Mammary epithelial cell (primary cell): ENCODE measurements at regions of chrX and their contacts with region 1.

Region 1: GRCh38 chrX:136694431-136695087 is 46.6 kb downstream of the CD40LG start:
- DNase-seq: peak; percentile 20
- H3K4me3 ChIP-seq: no peak overlapping the region
- H3K27ac ChIP-seq: no peak overlapping the region
- H3K4me1 ChIP-seq: peaks cover 5% of the 10 kb centered on the region
- H3K27me3 ChIP-seq: no peaks in the 10 kb centered on the region
- CTCF ChIP-seq: peak; percentile 79 to 80

Region 2: DNA sequence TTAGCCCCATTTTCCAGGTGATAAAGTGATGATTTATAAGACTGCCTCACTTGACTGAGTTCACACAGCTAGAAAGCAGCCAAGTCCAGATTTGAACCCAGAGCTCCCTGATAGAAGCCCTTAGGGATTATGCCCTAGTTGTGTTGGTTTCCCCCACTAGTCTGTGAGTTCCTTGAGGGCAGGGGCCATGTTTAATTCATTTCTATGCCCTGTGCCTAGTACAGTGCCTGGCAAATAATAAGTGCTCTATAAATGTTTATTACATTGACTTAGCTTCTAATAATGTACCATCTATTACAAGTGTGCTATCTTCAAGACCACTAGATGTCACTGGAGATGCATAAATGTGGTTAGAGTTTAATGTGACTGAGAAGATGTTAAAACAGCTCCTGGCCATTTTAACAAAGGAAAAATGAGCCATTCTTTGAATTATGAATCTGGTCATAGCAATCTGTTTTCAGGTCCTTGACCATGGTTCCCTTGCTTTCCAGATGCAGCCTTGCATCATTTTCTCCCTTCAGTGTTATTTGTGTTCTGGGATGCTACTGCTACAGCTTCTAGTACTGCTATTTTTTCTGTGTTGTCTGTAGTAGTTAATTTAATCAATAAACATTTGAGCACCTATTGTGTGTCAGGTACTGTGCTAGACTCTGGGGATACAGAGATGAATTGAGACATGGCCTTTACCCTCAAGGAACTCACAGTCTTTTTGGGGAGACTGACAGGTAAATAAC is 666.1 kb before region 1 on chrX:
- CTCF ChIA-PET with region 1: interaction called, 3 read pairs
- dilution Hi-C with region 1: no loop called
- in situ Hi-C with region 1: no loop called
- intact Hi-C with region 1: loop called (anchors 2 kb)
- DNase-seq: peak; percentile 53
- H3K4me3 ChIP-seq: no peak overlapping the region
- H3K27ac ChIP-seq: no peak overlapping the region
- H3K4me1 ChIP-seq: no peaks in the 10 kb centered on the region
- H3K27me3 ChIP-seq: no peaks in the 10 kb centered on the region
- CTCF ChIP-seq: peak; percentile 59 to 67

Region 3: GRCh38 chrX:136251041-136251991 is 443.2 kb before region 1 on chrX and contains the start of gene MAP7D3:
- CTCF ChIA-PET with region 1: no interaction called
- dilution Hi-C with region 1: no loop called
- in situ Hi-C with region 1: loop called in 1 of 2 experiments (anchors 25 kb)
- intact Hi-C with region 1: no loop called
- DNase-seq: peak; percentile 57
- H3K4me3 ChIP-seq: peak within 1 kb of the TSS; percentile 35 to 63 (median 62)
- H3K27ac ChIP-seq: peak within 1 kb of the TSS; percentile 67
- H3K4me1 ChIP-seq: peaks cover 4% of the 10 kb centered on the region
- H3K27me3 ChIP-seq: no peaks in the 10 kb centered on the region
- CTCF ChIP-seq: no peak
- total RNA-seq, gene MAP7D3: 11.7 to 14.6 TPM

Region 4: DNA sequence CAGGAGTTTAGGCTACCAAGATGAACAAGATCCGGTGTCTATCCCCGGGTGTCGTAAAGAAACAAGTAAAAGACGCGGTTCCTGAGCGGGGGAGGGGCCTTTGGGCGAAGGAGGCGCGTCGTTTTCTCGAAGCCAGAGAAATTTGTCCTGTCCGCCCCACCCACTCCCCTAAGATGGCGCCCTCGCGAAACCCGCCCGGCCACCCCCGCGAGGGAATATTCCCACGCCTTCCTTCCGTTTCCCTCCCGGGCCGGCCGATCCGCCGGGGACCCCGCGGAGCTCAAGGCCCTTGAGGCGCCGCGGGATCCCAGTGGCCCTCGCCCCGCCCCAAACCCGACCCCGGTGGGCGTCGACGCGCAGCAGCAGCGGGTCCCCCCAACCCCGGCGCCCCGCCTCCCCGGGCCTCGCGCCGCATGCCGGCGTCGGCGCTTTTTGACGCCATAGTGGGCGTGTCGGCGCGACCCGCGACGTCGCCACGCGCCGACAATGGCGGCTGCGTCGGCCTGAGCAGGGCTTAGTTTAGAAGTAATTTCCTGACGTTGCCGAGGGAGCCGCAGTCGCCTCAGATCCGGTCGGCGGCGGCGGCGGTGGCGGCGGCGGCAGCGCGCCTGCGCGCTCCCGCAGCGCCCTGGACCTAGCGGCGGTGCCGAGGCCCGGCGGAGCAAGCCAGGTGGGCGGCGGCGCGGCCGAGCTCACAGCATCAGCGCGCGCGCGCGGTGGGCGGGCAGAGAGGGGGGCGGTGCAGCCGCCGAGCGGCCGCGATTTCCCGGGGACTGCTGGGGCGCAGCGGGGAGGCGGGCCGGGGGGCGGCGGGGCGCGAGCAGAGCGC is 197.6 kb before region 1 on chrX and contains the start of gene HTATSF1:
- CTCF ChIA-PET with region 1: no interaction called
- dilution Hi-C with region 1: no loop called
- in situ Hi-C with region 1: no loop called
- intact Hi-C with region 1: loop called (anchors 1 kb)
- DNase-seq: peak; percentile 82
- H3K4me3 ChIP-seq: peak within 1 kb of the TSS; percentile 72 to 80 (median 74)
- H3K27ac ChIP-seq: peak within 1 kb of the TSS; percentile 85
- H3K4me1 ChIP-seq: no peaks in the 10 kb centered on the region
- H3K27me3 ChIP-seq: no peaks in the 10 kb centered on the region
- CTCF ChIP-seq: no peak
- total RNA-seq, gene HTATSF1: 18.2 to 26.1 TPM

Region 5: GRCh38 chrX:136608295-136609171 is 86.0 kb before region 1 on chrX:
- CTCF ChIA-PET with region 1: interaction called, 4 read pairs
- dilution Hi-C with region 1: no loop called
- in situ Hi-C with region 1: no loop called
- intact Hi-C with region 1: loop called (anchors 1 kb)
- DNase-seq: peak; percentile 20
- H3K4me3 ChIP-seq: no peak overlapping the region
- H3K27ac ChIP-seq: no peak overlapping the region
- H3K4me1 ChIP-seq: peaks cover 4% of the 10 kb centered on the region
- H3K27me3 ChIP-seq: no peaks in the 10 kb centered on the region
- CTCF ChIP-seq: peak; percentile 41 to 42

Region 6: GRCh38 chrX:136839196-136839595 is 144.6 kb after region 1 on chrX:
- CTCF ChIA-PET with region 1: no interaction called
- dilution Hi-C with region 1: no loop called
- in situ Hi-C with region 1: no loop called
- intact Hi-C with region 1: no loop called
- DNase-seq: no peak
- H3K4me3 ChIP-seq: no peak overlapping the region
- H3K27ac ChIP-seq: no peak overlapping the region
- H3K4me1 ChIP-seq: no peaks in the 10 kb centered on the region
- H3K27me3 ChIP-seq: no peaks in the 10 kb centered on the region
- CTCF ChIP-seq: no peak